PC-9 (cell line): ENCODE measurements at regions of chr10 and their contacts with region 1.

Region 1: GRCh38 chr10:133400624-133401424 is 6.9 kb downstream of the MTG1 start:
- DNase-seq: no peak
- H3K4me3 ChIP-seq: no peak overlapping the region
- H3K27ac ChIP-seq: no peak overlapping the region
- H3K4me1 ChIP-seq: no peaks in the 10 kb centered on the region
- H3K27me3 ChIP-seq: no peaks in the 10 kb centered on the region
- CTCF ChIP-seq: no peak

Region 2: DNA sequence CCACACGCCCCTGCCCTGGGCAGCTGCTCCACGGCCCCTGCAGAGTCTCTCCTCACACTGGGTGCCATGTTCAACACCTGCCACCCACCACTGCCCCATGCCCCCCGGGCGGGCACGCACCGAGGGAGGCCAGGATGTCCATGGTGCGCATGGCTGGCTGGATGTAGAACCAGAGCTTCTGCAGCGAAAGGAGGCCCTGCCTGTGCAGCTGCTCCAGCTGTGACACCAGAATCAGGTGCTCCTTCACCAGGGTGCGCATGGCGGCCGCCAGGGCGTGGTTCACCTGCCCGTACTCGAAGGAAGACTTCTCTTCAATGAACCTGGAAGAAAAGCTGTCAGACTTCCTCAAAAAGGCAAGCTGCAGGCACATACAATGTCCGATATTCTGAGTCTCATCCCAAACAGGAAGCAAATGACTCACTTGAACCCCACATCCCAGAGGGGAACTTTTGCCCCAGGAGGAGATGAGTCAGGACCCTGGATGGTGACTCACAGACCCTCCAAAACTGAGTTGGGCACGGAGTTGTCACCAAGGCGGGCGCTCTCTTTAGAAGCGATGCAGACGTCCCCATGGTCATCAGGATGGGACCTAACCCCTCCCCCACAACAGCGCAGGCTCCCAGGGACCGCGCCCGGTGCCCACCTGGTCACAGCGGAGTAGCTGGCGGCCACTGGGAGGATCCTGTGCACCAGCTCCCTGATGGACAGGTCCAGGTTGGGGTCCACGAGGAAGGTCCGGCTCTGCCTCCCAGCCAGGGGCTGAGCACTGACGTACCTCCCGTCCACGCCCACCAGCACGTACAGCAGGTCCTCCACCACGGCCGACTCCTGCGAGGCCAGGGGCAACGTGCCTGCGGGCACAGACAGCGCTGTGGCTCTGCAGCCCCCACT is 107.7 kb before region 1 on chr10:
- CTCF ChIA-PET with region 1: interaction called, 15 read pairs
- POLR2A ChIA-PET with region 1: no interaction called
- intact Hi-C with region 1: no loop called
- DNase-seq: peak; percentile 66 to 73
- H3K4me3 ChIP-seq: no peak overlapping the region; the same call in 1 of the 2 replicates
- H3K27ac ChIP-seq: peak overlapping the region; percentile 72
- H3K4me1 ChIP-seq: peaks cover 22% of the 10 kb centered on the region
- H3K27me3 ChIP-seq: no peaks in the 10 kb centered on the region
- CTCF ChIP-seq: no peak